ENCODE measurements at regions of chr2 and their contacts with region 1.

Region 1: DNA sequence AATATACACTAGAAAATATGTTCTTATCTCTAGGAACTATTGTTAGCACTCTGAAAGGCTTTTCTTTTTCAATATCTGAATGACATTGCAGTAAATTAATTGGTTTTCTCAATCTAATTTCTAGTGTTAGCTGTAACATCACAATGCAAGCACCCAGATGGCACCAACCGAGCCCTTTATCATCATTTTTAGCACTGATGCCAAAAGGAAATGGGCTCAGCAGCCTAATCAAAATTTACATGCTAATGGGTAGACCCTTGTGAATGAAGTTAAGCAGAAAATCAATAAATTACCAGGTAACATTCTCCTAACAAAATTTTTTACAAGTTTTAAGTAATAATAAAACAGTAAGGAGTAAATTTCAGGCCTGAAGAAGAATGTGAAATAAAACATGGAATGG is 53.5 kb upstream of the PGAP1 start:
- DNase-seq: no peak
- ATAC-seq: no peak
- H3K4me3 Mint-ChIP-seq: no peak overlapping the region
- H3K27ac Mint-ChIP-seq: no peak overlapping the region
- H3K4me1 Mint-ChIP-seq: peaks cover 4% of the 10 kb centered on the region
- H3K27me3 Mint-ChIP-seq: no peaks in the 10 kb centered on the region

Region 2: DNA sequence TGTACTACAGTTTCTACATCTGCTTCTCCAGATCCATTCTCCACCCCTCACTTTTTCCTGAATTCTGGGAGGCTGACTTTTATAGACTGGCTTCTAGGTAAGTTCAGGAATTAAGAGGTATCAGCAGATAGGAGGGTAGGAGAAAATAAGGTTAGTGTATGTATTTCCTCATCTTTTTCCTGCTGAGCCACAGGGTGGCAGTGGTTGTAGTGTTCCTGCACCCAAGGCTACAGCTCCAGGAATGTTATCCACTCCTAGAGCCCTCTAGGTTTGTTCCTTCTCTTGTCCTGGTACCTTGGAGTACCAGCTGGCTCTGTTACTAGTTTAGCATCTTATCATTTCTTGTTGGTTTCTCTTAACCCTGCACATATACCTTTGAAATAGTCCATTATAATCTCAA is 130.1 kb before region 1 on chr2:
- POLR2A ChIA-PET with region 1: no interaction called
- DNase-seq: no peak
- ATAC-seq: no peak
- H3K4me3 Mint-ChIP-seq: no peak overlapping the region
- H3K27ac Mint-ChIP-seq: peak overlapping the region; percentile 20
- H3K4me1 Mint-ChIP-seq: peaks cover 15% of the 10 kb centered on the region
- H3K27me3 Mint-ChIP-seq: no peaks in the 10 kb centered on the region

Region 3: DNA sequence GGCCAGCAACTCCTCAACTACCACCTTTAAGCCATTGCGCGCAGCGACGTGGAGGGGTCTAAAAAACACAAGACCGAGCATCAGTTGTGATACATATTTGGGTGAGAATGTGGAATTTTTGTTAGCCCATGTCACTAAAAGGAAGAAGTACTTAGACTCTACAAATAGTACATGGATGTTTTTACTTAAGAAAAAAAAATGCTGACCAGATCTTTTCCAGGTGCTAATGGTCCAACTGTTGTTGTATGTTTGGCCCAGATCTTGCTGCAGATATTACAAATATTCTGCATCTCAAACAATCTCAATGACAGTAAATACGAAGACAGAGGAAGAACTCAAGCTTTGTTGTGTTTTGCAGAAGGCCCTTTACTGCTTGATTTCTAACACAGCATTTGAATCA is 13.6 kb after region 1 on chr2:
- POLR2A ChIA-PET with region 1: interaction called, 10 read pairs
- DNase-seq: no peak
- ATAC-seq: no peak
- H3K4me3 Mint-ChIP-seq: no peak overlapping the region
- H3K27ac Mint-ChIP-seq: peak overlapping the region; percentile 14
- H3K4me1 Mint-ChIP-seq: peaks cover 27% of the 10 kb centered on the region
- H3K27me3 Mint-ChIP-seq: no peaks in the 10 kb centered on the region